ENCODE measurements at regions of chr9 and their contacts with region 1.

Region 1: GRCh38 chr9:21465859-21466518 is 16.1 kb downstream of the IFNE start:
- DNase-seq: peak; percentile 27
- H3K4me3 ChIP-seq: no peak overlapping the region
- H3K27ac ChIP-seq: no peak overlapping the region
- H3K27me3 ChIP-seq: no peaks in the 10 kb centered on the region
- CTCF ChIP-seq: peak; percentile 75

Region 2: DNA sequence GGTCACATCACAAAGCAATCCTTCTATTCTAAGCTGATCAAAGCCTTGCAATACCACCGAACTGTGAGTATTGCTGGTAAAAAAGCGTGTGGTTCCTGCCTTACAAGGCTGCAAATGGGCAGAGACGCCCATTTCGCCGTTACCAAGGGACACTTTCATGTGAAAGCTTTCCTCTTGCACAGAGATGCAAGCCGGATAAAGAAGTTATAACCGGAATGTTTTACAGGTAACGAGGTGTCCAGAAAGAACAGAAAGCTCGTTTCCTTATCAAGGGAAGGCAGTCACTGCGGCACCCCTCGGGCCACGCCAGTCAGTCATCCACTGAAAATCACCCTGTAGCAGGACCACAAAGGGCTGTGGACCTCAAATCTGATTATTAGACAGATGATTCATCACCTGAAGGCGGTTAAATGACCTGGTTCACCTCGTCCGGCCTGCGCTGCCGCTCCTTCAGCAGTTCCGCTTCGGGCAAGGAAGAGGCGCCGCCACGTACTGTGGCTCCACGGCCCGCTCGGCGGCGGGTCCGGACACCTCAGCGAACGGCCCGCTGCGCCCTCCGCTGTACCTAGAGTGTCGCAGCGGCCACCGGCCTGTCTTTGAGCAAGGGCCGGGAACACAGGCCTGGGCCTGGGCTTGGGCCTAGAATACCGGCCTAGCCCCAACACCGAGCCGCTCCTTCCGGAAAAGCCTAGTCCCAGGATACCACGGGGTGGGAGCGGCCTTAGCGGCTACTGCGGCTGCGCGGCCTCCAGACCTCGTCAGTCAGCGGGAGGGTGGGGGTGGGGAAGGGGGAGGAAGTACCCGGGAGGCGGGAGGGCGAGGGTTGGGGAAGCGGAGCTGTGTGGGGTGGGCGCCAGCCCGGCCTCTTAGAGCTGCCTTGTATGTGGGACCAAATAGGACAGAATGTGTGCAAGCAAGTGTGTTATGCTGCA is 131.0 kb before region 1 on chr9 and contains the start of gene KLHL9:
- CTCF ChIA-PET with region 1: interaction called, 11 read pairs
- POLR2A ChIA-PET with region 1: no interaction called
- DNase-seq: peak; percentile 82
- H3K4me3 ChIP-seq: peak within 1 kb of the TSS; percentile 84
- H3K27ac ChIP-seq: peak within 1 kb of the TSS; percentile 81
- H3K27me3 ChIP-seq: no peaks in the 10 kb centered on the region
- CTCF ChIP-seq: no peak
- polyA plus RNA-seq, gene KLHL9: 32.4 and 42.2 TPM in 2 replicates

Region 3: DNA sequence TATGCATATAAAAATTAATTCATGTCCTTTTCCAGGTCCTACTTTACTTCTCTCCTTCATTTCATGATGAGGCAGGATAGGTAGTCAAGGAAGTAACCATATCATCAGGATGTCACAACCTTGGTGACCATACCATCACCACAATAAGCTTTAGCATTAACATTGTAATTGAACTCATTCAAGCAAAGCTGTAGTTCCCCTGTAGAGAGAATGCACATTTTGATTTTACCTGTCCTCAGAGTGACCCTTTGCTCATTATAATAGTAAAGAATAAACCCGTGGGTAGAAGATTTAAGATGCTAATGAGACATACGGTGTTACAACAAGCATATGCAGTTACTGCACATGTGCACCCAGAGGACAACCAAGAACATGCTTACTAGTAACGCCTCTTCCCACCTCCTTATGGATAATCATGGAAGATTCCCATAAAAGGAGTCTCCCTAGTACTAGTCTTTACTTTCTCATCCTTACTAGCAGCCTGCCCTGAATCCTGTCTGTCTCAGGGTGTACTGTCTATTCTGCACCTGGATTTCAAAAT is 117.5 kb before region 1 on chr9:
- CTCF ChIA-PET with region 1: no interaction called
- POLR2A ChIA-PET with region 1: no interaction called
- DNase-seq: no peak
- H3K4me3 ChIP-seq: no peak overlapping the region
- H3K27ac ChIP-seq: no peak overlapping the region
- H3K27me3 ChIP-seq: no peaks in the 10 kb centered on the region
- CTCF ChIP-seq: no peak

Region 4: GRCh38 chr9:21402386-21403251 is 63.4 kb before region 1 on chr9:
- CTCF ChIA-PET with region 1: no interaction called
- POLR2A ChIA-PET with region 1: no interaction called
- DNase-seq: no peak
- H3K4me3 ChIP-seq: peak overlapping the region; percentile 12
- H3K27ac ChIP-seq: no peak overlapping the region
- H3K27me3 ChIP-seq: peaks cover 45% of the 10 kb centered on the region
- CTCF ChIP-seq: no peak; the same call in 1 of the 2 replicates

Region 5: DNA sequence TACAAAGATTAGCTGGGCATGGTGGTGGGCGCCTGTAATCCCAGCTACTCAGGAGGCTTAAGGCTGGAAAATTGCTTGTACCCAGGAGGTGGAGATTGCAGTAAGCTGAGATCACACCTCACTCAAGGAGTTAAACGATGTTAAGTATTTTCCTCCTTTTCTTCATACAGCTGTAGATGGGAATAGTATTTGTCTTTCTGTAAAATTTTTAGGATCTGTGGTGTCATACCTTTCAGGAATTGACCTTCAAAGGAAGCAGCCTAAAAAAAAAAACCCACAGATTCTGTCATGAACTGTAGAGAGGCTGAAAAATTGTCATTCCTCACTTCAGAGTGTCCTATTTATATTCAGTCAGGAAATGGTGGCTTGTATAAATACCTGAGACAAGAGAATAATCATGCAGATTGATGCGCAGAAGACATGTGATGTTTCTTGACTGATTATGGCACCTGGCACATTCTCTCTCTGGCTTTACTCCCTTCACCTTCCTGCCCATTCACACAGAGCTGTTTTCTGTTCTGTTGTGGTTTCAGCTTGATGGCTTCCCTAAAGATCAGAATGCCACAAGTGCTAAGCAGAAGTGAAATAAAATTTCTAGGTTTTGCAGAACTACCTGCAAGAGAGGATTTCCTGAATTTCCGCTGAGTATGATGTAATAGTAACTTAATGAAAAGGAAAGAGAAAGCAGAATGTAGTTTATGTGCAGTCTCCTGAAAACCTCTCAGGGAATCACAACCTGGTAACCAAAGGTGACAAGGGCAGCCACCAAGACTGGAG is 22.0 kb before region 1 on chr9:
- CTCF ChIA-PET with region 1: interaction called, 11 read pairs
- POLR2A ChIA-PET with region 1: no interaction called
- DNase-seq: no peak
- H3K4me3 ChIP-seq: no peak overlapping the region
- H3K27ac ChIP-seq: no peak overlapping the region
- H3K27me3 ChIP-seq: no peaks in the 10 kb centered on the region
- CTCF ChIP-seq: no peak

Region 6: GRCh38 chr9:21709464-21710058 is 243.6 kb after region 1 on chr9:
- CTCF ChIA-PET with region 1: interaction called, 17 read pairs
- POLR2A ChIA-PET with region 1: no interaction called
- DNase-seq: no peak
- H3K4me3 ChIP-seq: no peak overlapping the region
- H3K27ac ChIP-seq: no peak overlapping the region
- H3K27me3 ChIP-seq: no peaks in the 10 kb centered on the region
- CTCF ChIP-seq: peak; percentile 75

Region 7: DNA sequence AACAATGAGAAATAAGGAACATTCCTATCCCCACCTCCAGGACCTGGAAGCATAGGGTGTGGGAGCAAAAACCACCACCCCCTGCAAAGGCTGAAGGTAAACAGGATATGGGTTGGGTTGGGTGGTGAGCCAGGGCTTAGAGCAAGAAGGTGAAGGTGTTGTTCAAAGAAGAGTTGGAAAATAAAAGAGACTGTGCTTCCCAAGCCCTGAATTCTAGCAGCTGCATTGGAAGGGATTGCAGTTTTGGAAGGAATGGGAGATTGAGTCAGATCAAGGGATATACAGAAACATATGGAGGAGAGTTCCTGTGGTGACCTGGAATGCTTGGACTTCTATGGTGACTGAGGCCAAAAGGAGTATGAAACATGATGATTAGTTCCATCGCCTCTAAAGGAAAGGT is 311.7 kb after region 1 on chr9:
- CTCF ChIA-PET with region 1: interaction called, 16 read pairs
- POLR2A ChIA-PET with region 1: no interaction called
- DNase-seq: peak; percentile 80
- H3K4me3 ChIP-seq: no peak overlapping the region
- H3K27ac ChIP-seq: peak overlapping the region; percentile 95
- H3K27me3 ChIP-seq: no peaks in the 10 kb centered on the region
- CTCF ChIP-seq: no peak

Region 8: GRCh38 chr9:21795483-21795882 is 329.5 kb after region 1 on chr9:
- CTCF ChIA-PET with region 1: interaction called, 30 read pairs
- POLR2A ChIA-PET with region 1: no interaction called
- DNase-seq: no peak
- H3K4me3 ChIP-seq: no peak overlapping the region
- H3K27ac ChIP-seq: no peak overlapping the region
- H3K27me3 ChIP-seq: no peaks in the 10 kb centered on the region
- CTCF ChIP-seq: no peak

Measured in AG04450 (cell line).